GM18951 (cell line): ENCODE measurements at regions of chr3 and their contacts with region 1.

Region 1: DNA sequence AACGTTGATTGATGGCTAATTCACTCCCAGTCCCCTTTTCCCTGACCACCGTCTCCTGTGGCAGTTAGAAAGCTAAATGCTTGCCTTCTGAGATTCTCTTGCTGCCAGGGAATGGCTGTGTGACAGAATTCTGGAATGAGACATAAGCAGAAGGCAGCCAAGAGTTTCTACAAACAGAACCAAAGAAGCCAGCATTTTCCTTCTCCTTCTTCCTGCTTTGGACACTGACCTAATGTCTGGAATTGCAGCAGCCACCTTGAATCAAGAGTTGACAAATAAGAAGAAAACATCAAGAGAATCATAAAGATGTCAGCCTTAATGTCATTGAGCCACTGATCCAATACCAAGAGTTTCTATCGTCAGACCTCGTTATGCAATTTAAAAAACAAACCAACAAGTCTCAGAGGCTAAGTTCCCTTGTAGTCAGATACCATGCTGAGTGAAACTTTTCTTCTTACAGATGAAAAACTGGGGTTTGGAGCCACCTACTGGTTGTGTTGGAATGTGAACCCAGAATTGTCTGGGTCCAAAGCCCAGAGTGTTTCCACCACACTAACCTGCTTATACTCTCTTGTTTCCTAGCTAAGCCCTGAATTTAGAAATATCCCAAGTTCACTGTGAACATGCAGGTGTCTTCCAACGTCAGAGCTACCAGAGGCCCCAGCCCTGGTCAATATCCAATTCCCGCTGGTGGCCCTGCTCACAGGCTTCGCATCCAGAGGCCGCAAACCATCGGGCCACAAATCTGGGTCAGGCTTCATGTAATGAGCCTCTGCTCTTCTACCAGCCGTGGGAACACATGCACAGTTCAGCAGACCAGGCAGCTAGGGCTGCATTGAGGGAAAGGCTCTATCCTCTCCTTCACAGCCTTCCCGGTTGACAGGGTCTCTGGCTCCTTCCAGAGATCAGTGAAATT is 42.5 kb downstream of the MCF2L2 start:
- POLR2A ChIP-seq: no peak

Region 2: GRCh38 chr3:182713743-182714517 is 672.0 kb before region 1 on chr3:
- in situ Hi-C with region 1: loop called (anchors 10 kb)
- POLR2A ChIP-seq: no peak

Region 3: GRCh38 chr3:182889948-182890629 is 495.9 kb before region 1 on chr3:
- in situ Hi-C with region 1: loop called (anchors 25 kb)
- POLR2A ChIP-seq: no peak

Region 4: DNA sequence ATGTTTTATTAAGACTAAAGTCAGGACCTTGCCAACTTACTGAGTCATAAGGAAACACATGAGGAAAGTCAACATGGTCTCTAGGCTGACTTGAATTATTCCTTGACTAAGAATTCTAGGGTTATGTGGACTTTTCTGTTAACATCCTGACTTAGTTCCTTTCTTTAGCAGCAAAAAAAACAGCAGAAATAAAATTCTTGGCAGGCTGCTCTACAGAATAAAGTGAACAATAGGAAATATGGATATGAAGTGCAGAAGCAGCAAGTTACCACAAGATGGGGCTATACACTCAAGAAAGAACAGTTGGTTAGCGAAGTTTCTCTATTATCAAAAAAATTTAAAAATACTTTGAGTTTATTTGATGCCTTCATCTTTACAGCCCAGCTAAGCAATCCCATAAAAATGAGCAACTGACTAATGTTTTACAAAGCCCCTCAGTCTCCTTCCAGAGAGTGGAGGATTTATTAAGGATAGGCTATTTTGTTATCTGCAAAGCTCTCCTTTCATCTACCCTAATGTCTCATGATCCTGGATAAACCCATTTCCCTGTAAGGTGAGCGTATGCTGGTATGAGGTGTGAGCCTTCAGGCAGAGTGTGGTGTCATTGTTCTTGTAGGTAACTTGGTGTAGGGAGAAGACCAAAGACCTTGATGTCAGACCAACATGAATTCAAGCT is 263.6 kb before region 1 on chr3:
- in situ Hi-C with region 1: loop called (anchors 10 kb)
- POLR2A ChIP-seq: no peak

Region 5: GRCh38 chr3:183172051-183172639 is 213.8 kb before region 1 on chr3:
- in situ Hi-C with region 1: no loop called
- POLR2A ChIP-seq: no peak

Region 6: DNA sequence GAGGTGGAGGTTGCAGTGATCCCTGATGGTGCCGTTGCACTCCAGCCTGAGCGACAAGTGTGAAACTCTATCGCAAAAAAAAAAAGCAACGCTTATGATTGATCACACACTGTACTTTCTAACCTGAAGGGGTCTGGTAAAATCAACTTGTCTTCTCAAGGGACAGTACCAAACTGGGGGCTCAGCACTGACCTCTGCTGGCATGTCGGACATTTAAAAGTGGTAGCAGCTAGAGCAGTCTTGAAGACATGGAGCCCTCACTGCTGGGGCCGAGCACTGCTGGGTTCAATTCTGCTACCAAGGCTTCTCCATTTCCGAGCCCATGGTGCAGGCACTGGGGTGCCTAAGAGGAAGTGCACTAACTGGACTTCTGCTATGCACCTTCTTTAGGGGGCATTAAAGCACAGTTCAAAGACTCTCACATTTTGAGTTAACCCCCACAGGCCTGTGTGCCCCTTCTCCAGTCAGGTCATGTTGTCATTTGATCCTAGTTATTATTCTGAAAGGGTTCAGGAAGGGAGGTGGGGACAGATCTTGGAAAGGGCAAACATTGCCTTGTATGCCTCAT is 197.0 kb before region 1 on chr3:
- in situ Hi-C with region 1: loop called (anchors 10 kb)
- POLR2A ChIP-seq: no peak